GM12878 (cell line): ENCODE measurements at regions of chr7 and their contacts with region 1.

Region 1: GRCh38 chr7:122550545-122550944 is 148.4 kb downstream of the RNF133 start:
- DNase-seq: no peak
- ATAC-seq: peak; percentile 68
- H3K4me3 ChIP-seq: no peak overlapping the region
- H3K27ac ChIP-seq: no peak overlapping the region
- H3K4me1 ChIP-seq: no peaks in the 10 kb centered on the region
- H3K27me3 ChIP-seq: no peaks in the 10 kb centered on the region; a peak in 1 of 4 replicates
- CTCF ChIP-seq: peak in 2 of 3 experiments; percentile 23 to 60; a peak in 2 of 6 replicates
- EP300 ChIP-seq: no peak
- POLR2A ChIP-seq: no peak
- RAD21 ChIP-seq: no peak

Region 2: DNA sequence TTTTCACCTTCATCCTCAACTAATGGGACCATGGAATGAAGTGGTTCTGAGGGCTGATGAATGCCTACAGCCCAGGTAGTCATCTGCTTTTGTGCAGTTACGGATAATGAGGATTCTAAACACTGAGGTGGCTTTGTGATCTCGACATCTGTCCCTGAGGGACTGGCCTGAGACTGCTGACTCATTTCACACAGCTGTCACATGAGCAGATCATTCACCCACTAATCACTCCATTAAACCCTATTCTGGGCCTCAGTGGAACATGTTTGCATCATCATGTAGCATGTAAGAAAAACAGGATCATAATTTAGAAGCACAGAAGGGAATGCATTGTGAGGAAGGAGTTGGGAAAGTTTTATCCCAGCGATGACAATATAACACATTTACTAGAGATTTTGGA is 166.6 kb before region 1 on chr7:
- CTCF ChIA-PET with region 1: no interaction called
- POLR2A ChIA-PET with region 1: no interaction called
- RAD21 ChIA-PET with region 1: no interaction called
- SMC1A ChIA-PET with region 1: no interaction called
- in situ Hi-C with region 1: no loop called
- intact Hi-C with region 1: no loop called
- DNase-seq: peak; percentile 30
- ATAC-seq: peak; percentile 97
- H3K4me3 ChIP-seq: no peak overlapping the region
- H3K27ac ChIP-seq: no peak overlapping the region
- H3K4me1 ChIP-seq: no peaks in the 10 kb centered on the region
- H3K27me3 ChIP-seq: no peaks in the 10 kb centered on the region
- CTCF ChIP-seq: no peak
- EP300 ChIP-seq: peak; percentile 59 to 90
- POLR2A ChIP-seq: no peak
- RAD21 ChIP-seq: no peak

Region 3: GRCh38 chr7:122507591-122507990 is 43.0 kb before region 1 on chr7:
- CTCF ChIA-PET with region 1: no interaction called
- POLR2A ChIA-PET with region 1: no interaction called
- RAD21 ChIA-PET with region 1: no interaction called
- SMC1A ChIA-PET with region 1: no interaction called
- in situ Hi-C with region 1: no loop called
- intact Hi-C with region 1: no loop called
- DNase-seq: no peak
- ATAC-seq: no peak
- H3K4me3 ChIP-seq: no peak overlapping the region
- H3K27ac ChIP-seq: no peak overlapping the region
- H3K4me1 ChIP-seq: no peaks in the 10 kb centered on the region
- H3K27me3 ChIP-seq: no peaks in the 10 kb centered on the region
- CTCF ChIP-seq: no peak
- EP300 ChIP-seq: no peak
- POLR2A ChIP-seq: no peak
- RAD21 ChIP-seq: no peak

Region 4: DNA sequence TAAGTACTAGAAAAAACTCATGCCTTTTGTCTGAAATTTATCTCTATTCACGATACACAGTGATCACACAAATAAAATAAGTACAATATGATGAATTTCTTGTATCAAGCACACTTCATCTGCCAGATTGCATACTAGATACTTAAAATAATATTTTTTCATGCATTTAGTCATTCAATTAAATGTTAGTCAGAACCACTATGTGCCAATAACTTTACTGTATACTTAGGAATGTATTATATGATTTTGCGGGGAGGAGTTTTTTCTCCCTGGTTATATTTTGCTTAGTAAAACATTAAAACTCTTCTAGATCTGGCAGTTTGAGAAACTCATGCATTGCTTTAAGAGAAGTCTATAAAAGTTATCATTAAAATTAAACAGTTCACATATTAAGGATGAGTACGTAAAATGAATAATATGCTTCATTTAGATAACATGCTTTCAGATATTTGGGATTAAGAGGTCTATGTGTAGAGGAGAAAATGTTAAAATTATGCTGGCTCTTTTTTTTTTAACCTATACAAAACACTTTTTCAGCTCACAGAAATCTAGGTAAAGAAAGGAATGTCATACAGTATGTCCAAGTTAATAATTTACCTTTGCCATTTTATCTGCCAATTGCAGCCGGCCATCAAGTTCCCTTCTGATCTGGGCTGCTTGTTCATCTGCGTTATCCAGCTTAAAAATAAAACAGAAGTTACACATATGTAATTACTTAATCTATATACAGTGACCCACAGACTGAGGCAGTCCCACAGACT is 78.3 kb after region 1 on chr7:
- CTCF ChIA-PET with region 1: interaction called, 5 read pairs
- POLR2A ChIA-PET with region 1: no interaction called
- RAD21 ChIA-PET with region 1: interaction called, 5 read pairs
- SMC1A ChIA-PET with region 1: interaction called, 6 read pairs
- in situ Hi-C with region 1: no loop called
- intact Hi-C with region 1: loop called (anchors 5 kb)
- DNase-seq: no peak
- ATAC-seq: peak; percentile 44
- H3K4me3 ChIP-seq: no peak overlapping the region
- H3K27ac ChIP-seq: no peak overlapping the region
- H3K4me1 ChIP-seq: no peaks in the 10 kb centered on the region
- H3K27me3 ChIP-seq: no peaks in the 10 kb centered on the region
- CTCF ChIP-seq: no peak
- EP300 ChIP-seq: no peak
- POLR2A ChIP-seq: no peak
- RAD21 ChIP-seq: no peak